ENCODE measurements at regions of chr4 and their contacts with region 1.

Region 1: GRCh38 chr4:83034630-83035494 is at the start of gene COPS4:
- DNase-seq: peak; percentile 100
- ATAC-seq: peak; percentile 99
- H3K4me3 ChIP-seq: peak within 1 kb of the TSS; percentile 62
- H3K27ac ChIP-seq: peak within 1 kb of the TSS; percentile 83
- H3K4me1 ChIP-seq: peaks cover 5% of the 10 kb centered on the region
- H3K27me3 ChIP-seq: peaks cover 3% of the 10 kb centered on the region
- CTCF ChIP-seq: peak; percentile 40
- POLR2A ChIP-seq: peak; percentile 67
- RAD21 ChIP-seq: peak; percentile 21
- total RNA-seq, gene COPS4: 107 and 115 TPM in 2 replicates

Region 2: DNA sequence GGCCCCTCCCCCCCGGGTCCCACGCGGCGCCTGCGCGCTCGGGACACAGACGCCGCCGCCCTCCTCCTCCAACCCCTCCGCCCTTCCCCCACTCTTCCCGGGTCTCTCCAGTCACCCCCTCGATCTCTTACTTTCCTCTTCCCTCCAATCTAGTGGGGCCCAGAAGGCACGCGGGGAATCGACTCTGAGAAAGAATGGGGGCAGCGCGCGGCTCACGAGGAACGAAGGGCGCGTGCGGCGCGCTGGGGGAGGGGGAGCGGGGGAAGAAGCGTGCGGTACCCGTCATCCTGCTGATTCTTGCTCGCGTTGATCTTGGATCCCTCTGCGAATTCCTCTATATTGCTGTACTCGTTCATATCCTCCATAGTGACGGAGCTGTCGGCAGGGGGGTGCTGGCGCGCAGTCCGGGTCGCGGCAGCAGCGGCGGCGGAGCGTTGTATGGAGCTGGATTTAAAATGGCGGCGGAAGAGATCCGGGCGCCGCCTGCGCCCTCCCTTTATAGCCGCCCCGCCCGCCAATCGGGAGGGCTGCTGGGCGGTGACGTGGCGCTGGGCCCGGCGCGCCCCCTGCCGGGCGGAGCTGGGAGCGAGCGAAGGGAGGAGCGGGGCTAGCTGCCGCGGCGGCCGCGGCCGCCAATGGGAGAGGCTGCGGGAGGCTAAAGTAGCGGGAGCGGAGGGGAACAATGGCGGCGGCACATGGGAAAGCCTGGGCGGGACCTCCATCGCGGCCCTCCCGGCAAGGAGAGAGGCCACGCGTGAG is 605.7 kb before region 1 on chr4:
- CTCF ChIA-PET with region 1: no interaction called
- POLR2A ChIA-PET with region 1: no interaction called
- dilution Hi-C with region 1: no loop called
- in situ Hi-C with region 1: loop called (anchors 25 kb)
- intact Hi-C with region 1: no loop called
- DNase-seq: peak; percentile 85
- ATAC-seq: peak; percentile 75
- H3K4me3 ChIP-seq: peak overlapping the region; percentile 92
- H3K27ac ChIP-seq: peak overlapping the region; percentile 95
- H3K4me1 ChIP-seq: peaks cover 4% of the 10 kb centered on the region
- H3K27me3 ChIP-seq: no peaks in the 10 kb centered on the region
- CTCF ChIP-seq: peak; percentile 99
- POLR2A ChIP-seq: peak; percentile 99
- RAD21 ChIP-seq: no peak

Region 3: GRCh38 chr4:82851885-82852750 is 182.7 kb before region 1 on chr4:
- CTCF ChIA-PET with region 1: no interaction called
- POLR2A ChIA-PET with region 1: no interaction called
- dilution Hi-C with region 1: no loop called
- in situ Hi-C with region 1: no loop called
- intact Hi-C with region 1: no loop called
- DNase-seq: peak; percentile 49
- ATAC-seq: peak; percentile 51; the same call in 1 of the 2 replicates
- H3K4me3 ChIP-seq: no peak overlapping the region
- H3K27ac ChIP-seq: no peak overlapping the region
- H3K4me1 ChIP-seq: no peaks in the 10 kb centered on the region
- H3K27me3 ChIP-seq: no peaks in the 10 kb centered on the region
- CTCF ChIP-seq: peak; percentile 43
- POLR2A ChIP-seq: no peak
- RAD21 ChIP-seq: peak; percentile 42

Region 4: GRCh38 chr4:82890901-82891706 is 143.8 kb before region 1 on chr4 and contains the start of gene SEC31A:
- CTCF ChIA-PET with region 1: no interaction called
- POLR2A ChIA-PET with region 1: no interaction called
- dilution Hi-C with region 1: no loop called
- in situ Hi-C with region 1: no loop called
- intact Hi-C with region 1: loop called (anchors 2 kb)
- DNase-seq: peak; percentile 92
- ATAC-seq: peak; percentile 95
- H3K4me3 ChIP-seq: peak within 1 kb of the TSS; percentile 94
- H3K27ac ChIP-seq: peak within 1 kb of the TSS; percentile 98
- H3K4me1 ChIP-seq: no peaks in the 10 kb centered on the region
- H3K27me3 ChIP-seq: no peaks in the 10 kb centered on the region
- CTCF ChIP-seq: no peak
- POLR2A ChIP-seq: peak; percentile 98
- RAD21 ChIP-seq: no peak
- total RNA-seq, gene SEC31A: 366 and 369 TPM in 2 replicates

Region 5: GRCh38 chr4:82900331-82901128 is 134.3 kb before region 1 on chr4 and contains the start of gene THAP9:
- CTCF ChIA-PET with region 1: no interaction called
- POLR2A ChIA-PET with region 1: interaction called, 4 read pairs
- dilution Hi-C with region 1: no loop called
- in situ Hi-C with region 1: no loop called
- intact Hi-C with region 1: loop called (anchors 1 kb)
- DNase-seq: peak; percentile 100
- ATAC-seq: peak; percentile 95
- H3K4me3 ChIP-seq: peak within 1 kb of the TSS; percentile 69
- H3K27ac ChIP-seq: peak within 1 kb of the TSS; percentile 88
- H3K4me1 ChIP-seq: no peaks in the 10 kb centered on the region
- H3K27me3 ChIP-seq: no peaks in the 10 kb centered on the region
- CTCF ChIP-seq: no peak
- POLR2A ChIP-seq: peak; percentile 96
- RAD21 ChIP-seq: no peak
- total RNA-seq, gene THAP9: 2.9 and 4.2 TPM in 2 replicates

Region 6: GRCh38 chr4:82975792-82976191 is 59.1 kb before region 1 on chr4:
- CTCF ChIA-PET with region 1: no interaction called
- POLR2A ChIA-PET with region 1: interaction called, 19 read pairs
- dilution Hi-C with region 1: no loop called
- in situ Hi-C with region 1: no loop called
- intact Hi-C with region 1: no loop called
- DNase-seq: peak; percentile 78
- ATAC-seq: peak; percentile 42; the same call in 1 of the 2 replicates
- H3K4me3 ChIP-seq: no peak overlapping the region
- H3K27ac ChIP-seq: no peak overlapping the region
- H3K4me1 ChIP-seq: peaks cover 1% of the 10 kb centered on the region; the same call in 1 of the 2 replicates
- H3K27me3 ChIP-seq: no peaks in the 10 kb centered on the region
- CTCF ChIP-seq: no peak
- POLR2A ChIP-seq: no peak
- RAD21 ChIP-seq: no peak

Region 7: GRCh38 chr4:83012687-83013419 is 22.0 kb before region 1 on chr4:
- CTCF ChIA-PET with region 1: interaction called, 6 read pairs
- POLR2A ChIA-PET with region 1: interaction called, 7 read pairs
- dilution Hi-C with region 1: no loop called
- in situ Hi-C with region 1: no loop called
- intact Hi-C with region 1: loop called (anchors 2 kb)
- DNase-seq: peak; percentile 97
- ATAC-seq: peak; percentile 95
- H3K4me3 ChIP-seq: peak overlapping the region; percentile 70
- H3K27ac ChIP-seq: peak overlapping the region; percentile 75
- H3K4me1 ChIP-seq: no peaks in the 10 kb centered on the region; the same call in 1 of the 2 replicates
- H3K27me3 ChIP-seq: no peaks in the 10 kb centered on the region
- CTCF ChIP-seq: peak; percentile 52
- POLR2A ChIP-seq: peak; percentile 68
- RAD21 ChIP-seq: peak; percentile 44